ENCODE measurements at regions of chr19 and their contacts with region 1.

Region 1: DNA sequence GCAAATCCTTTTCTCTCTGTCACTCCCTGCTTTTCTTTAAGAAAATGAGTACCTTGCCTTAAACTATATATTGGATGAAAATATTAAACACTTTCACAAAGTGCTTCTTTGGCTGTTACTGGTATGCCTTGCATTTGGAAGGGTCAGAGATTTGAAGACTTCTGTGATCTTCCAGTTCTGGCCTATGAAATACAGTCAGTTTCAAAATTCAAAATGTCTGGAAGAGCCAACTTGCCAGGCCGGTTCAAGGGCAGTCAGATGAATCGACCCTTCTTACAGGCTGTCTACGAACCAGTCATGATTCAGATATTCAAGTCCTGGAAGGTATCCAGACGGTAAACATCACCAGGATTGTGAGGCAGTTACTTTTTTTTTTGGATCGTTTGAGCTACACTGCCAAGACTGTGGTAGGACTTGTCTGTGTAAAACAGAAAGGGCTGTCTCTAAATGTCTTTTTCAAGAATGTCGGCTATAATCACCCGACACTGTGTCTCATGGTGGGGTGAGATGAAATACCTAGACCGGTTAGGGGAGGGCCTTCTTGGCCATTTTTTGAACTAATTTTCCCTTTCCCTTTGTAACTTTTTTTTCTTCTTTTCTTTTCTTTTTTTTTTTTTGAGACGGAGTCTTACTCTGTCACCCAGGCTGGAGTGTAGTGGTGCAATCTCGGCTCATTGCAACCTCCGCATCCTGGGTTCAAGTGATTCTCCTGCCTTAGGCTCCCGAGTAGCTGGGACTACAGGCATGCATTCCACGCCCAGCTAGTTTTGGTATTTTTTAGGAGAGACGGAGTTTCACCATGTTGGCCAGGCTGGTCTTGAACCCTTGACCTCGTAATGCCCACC is 11.2 kb downstream of the ACTN4 start:
- DNase-seq: peak; percentile 98
- H3K4me3 ChIP-seq: peak overlapping the region; percentile 42
- H3K27ac ChIP-seq: peak overlapping the region; percentile 95
- H3K27me3 ChIP-seq: no peaks in the 10 kb centered on the region
- CTCF ChIP-seq: no peak

Region 2: DNA sequence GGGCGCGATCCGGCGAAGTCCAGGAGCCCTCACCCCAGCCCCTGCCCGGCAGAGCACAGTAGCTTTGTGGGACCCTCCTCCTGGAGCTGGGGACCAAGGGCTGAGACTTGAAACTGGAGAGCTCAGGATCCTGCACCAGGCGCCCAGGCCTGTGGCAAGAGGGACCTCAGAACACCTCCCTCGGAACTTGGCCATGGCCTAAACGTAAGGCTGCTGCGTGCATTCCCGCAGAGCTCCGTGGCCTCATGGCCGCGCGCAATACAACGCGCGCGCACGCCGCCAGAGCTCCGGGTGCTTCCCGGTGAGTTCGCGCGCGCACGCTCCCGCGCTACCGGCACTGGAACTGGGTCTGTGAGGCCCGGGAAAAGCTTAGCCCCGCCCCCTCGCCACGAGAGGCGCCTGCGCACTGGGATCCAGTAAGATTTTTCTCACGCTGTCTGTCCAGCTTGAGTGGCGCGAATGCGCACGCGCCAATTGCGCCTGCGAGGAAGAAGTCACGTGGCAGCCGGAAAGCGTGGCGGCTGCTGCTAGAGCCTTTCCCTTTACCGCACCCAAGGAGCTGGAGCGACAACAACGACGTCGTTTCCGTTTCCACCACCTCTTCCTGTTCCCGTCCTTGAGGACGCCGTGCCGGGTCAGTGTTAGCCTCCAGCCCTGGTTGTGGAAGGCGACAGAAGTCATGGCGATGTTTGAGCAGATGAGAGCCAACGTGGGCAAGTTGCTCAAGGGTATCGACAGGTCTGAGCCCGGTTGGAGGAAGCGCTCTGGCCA is 39.9 kb before region 1 on chr19 and contains the start of gene EIF3K:
- CTCF ChIA-PET with region 1: no interaction called
- POLR2A ChIA-PET with region 1: no interaction called
- DNase-seq: peak; percentile 98
- H3K4me3 ChIP-seq: peak within 1 kb of the TSS; percentile 97
- H3K27ac ChIP-seq: peak within 1 kb of the TSS; percentile 43
- H3K27me3 ChIP-seq: no peaks in the 10 kb centered on the region
- CTCF ChIP-seq: no peak
- polyA plus RNA-seq, gene EIF3K: 168 and 250 TPM in 2 replicates

Region 3: DNA sequence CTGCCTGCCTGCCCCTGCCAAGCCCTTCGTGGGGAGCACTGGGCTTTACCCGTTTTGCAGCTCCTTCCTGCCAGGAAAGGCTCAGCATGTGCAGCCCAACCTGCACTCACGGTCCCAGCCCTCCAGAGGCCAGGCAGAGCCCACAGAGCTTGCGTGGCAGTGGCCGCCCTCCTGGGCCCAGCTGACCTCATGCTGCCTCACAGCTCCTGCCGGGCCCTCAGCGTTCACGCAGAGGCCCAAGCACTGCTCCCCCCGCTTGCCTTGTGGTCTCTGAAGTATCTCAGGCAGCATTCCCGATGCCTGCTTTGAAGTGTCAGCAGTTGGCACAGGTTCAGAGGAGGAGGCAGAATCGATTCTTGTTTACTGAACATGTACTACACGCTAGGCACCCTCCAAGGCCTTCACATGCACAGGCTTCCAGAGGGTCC is 53.1 kb after region 1 on chr19:
- CTCF ChIA-PET with region 1: no interaction called
- POLR2A ChIA-PET with region 1: interaction called, 11 read pairs
- DNase-seq: peak; percentile 86
- H3K4me3 ChIP-seq: no peak overlapping the region
- H3K27ac ChIP-seq: peak overlapping the region; percentile 83
- H3K27me3 ChIP-seq: no peaks in the 10 kb centered on the region
- CTCF ChIP-seq: peak; percentile 30